ENCODE measurements at regions of chr17 and their contacts with region 1.

Region 1: GRCh38 chr17:1260086-1260769 is 10.0 kb upstream of the BHLHA9 start:
- DNase-seq: no peak
- ATAC-seq: no peak
- H3K4me3 ChIP-seq: peak overlapping the region in 1 of 2 experiments; percentile 49
- H3K4me3 Mint-ChIP-seq: peak overlapping the region; percentile 49
- H3K27ac ChIP-seq: no peak overlapping the region
- H3K27ac Mint-ChIP-seq: no peak overlapping the region
- H3K4me1 ChIP-seq: peaks cover 24% of the 10 kb centered on the region
- H3K4me1 Mint-ChIP-seq: peaks cover 31% of the 10 kb centered on the region
- H3K27me3 ChIP-seq: peaks cover 0 to 6% of the 10 kb centered on the region in 2 experiments
- H3K27me3 Mint-ChIP-seq: peaks cover 18% of the 10 kb centered on the region
- CTCF ChIP-seq: no peak

Region 2: GRCh38 chr17:1304962-1305563 is 44.8 kb after region 1 on chr17:
- CTCF ChIA-PET with region 1: no interaction called
- POLR2A ChIA-PET with region 1: no interaction called
- intact Hi-C with region 1: no loop called
- DNase-seq: no peak
- ATAC-seq: no peak
- H3K4me3 ChIP-seq: no peak overlapping the region
- H3K4me3 Mint-ChIP-seq: no peak overlapping the region
- H3K27ac ChIP-seq: no peak overlapping the region
- H3K27ac Mint-ChIP-seq: no peak overlapping the region
- H3K4me1 ChIP-seq: no peaks in the 10 kb centered on the region
- H3K4me1 Mint-ChIP-seq: no peaks in the 10 kb centered on the region
- H3K27me3 ChIP-seq: peaks cover 0 to 5% of the 10 kb centered on the region in 2 experiments
- H3K27me3 Mint-ChIP-seq: peaks cover 31% of the 10 kb centered on the region
- CTCF ChIP-seq: no peak

Region 3: GRCh38 chr17:1532836-1533602 is 272.8 kb after region 1 on chr17:
- CTCF ChIA-PET with region 1: interaction called, 3 read pairs
- POLR2A ChIA-PET with region 1: no interaction called
- intact Hi-C with region 1: loop called in 1 of 2 experiments (anchors 5 kb)
- DNase-seq: peak in 8 of 9 experiments; percentile 9 to 66 (median 51)
- ATAC-seq: peak; percentile 93
- H3K4me3 ChIP-seq: no peak overlapping the region
- H3K4me3 Mint-ChIP-seq: no peak overlapping the region
- H3K27ac ChIP-seq: no peak overlapping the region
- H3K27ac Mint-ChIP-seq: peak overlapping the region; percentile 55
- H3K4me1 ChIP-seq: no peaks in the 10 kb centered on the region
- H3K4me1 Mint-ChIP-seq: no peaks in the 10 kb centered on the region
- H3K27me3 ChIP-seq: no peaks in the 10 kb centered on the region
- H3K27me3 Mint-ChIP-seq: no peaks in the 10 kb centered on the region
- CTCF ChIP-seq: peak; percentile 41

Measured in CD8-positive, alpha-beta T cell (primary cell).